PC-9 (cell line): ENCODE measurements at regions of chr1 and their contacts with region 1.

Region 1: DNA sequence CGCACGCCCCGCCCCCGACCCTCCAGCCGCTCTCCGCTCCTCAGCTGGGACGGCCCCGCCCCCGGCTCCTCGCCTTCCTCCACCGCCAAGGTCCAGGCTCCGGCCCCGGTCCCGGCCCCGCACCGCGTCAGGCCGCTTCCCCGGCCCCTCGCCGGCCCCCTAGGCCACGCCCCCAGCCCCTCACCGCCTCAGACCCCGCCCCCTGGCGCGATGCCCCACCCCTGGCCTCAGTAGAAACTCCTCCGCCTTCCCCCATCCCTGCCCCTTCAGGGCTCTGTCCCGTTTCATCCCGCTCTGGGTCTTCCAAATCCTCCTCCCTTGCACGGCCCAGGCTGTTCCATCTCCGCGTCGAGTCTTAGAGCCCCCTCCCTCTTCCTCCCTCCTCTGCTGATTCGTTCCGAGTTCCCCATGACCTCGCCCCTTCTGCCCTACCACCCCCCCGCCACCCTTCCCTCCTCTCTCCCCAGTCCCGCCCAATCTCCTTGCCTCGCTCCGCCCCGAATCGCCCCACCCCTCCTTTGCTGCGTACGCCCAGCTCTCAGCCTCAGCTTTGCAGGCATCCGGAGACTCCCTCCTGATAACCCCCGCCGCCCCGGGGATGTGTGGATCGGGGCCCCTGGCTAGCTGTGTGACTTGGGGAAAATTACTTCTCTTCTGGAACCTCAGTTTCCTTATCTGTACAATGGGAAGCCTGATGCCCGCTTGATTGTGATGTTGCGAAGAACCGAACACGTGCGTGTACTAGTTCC is 448 bp upstream of the ASAP3 start:
- DNase-seq: peak; percentile 63 to 90
- H3K4me3 ChIP-seq: peak overlapping the region; percentile 61; the same call in 1 of the 2 replicates
- H3K27ac ChIP-seq: no peak overlapping the region
- H3K4me1 ChIP-seq: peaks cover 10% of the 10 kb centered on the region
- H3K27me3 ChIP-seq: no peaks in the 10 kb centered on the region
- CTCF ChIP-seq: no peak

Region 2: DNA sequence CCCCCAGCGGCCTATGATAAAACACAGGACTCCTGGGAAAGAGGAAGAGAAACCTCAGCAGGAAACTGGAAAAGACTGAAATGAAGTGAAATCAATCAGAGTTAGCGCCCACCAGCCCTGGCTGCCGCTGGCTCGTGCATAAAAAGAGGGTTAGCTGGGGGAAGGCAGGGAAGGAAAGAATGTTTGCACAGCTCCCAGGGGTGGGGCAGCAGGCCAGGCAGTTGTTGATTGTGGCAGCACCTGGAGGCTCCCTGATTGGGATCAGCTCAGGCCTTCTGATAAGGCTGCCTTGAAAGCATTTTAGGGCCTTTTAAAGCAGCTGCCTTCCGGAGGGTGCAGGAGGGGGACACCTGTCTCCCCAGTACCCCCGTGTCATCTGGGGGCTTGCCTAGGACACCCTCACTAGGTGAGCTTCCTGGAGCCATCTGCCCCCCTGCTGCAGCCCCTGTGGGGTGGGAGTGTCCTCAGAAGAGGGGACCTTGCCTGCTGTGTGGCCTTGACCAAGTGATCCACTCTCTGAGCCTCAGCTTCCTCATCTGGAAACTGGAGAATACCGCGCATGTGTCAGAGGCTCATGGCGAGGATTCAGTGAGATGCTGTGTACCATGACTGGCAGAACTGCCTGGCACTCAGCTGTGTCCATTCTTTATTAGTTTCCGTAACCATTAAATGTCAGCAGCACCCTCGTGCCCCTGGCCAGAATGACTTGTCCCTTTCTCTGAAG is 767.2 kb before region 1 on chr1:
- CTCF ChIA-PET with region 1: no interaction called
- POLR2A ChIA-PET with region 1: interaction called, 15 read pairs
- intact Hi-C with region 1: no loop called
- DNase-seq: peak in 1 of 2 experiments; percentile 46
- H3K4me3 ChIP-seq: no peak overlapping the region
- H3K27ac ChIP-seq: no peak overlapping the region
- H3K4me1 ChIP-seq: peaks cover 7% of the 10 kb centered on the region; the same call in 1 of the 2 replicates
- H3K27me3 ChIP-seq: no peaks in the 10 kb centered on the region
- CTCF ChIP-seq: no peak

Region 3: DNA sequence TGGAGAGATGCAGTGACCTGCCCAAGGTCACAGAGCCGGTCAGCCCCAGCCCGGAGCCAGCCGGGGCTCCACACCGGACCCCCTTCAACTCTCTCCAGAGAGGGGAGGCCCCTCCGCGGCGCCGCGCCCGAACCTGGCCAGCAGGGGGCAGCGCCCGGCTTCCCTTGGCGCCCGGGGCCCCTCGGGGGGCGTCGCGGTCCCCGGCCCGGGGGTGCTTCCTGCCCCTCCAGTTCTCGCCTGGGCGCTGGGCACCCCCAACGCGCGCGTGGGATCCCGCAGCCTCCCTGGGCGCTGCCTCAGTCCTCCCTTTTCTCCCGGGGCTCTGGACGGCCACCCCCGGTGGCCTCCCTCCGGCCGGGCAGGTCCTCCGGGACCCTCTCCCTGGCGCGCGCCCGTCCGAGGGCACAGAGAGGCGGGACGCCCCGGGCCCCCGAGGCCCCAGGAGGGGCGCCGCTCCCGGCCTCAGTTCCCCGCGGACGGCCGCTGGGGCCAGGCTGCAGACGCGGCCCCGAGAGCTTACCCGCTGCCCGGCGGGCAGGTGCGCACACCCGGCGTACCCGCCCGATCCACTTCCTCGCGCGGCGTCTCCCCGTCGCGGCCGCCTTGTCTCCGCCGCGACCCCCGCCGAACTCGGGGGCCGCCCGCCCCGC is 267.5 kb before region 1 on chr1:
- CTCF ChIA-PET with region 1: no interaction called
- POLR2A ChIA-PET with region 1: no interaction called
- intact Hi-C with region 1: no loop called
- DNase-seq: peak in 1 of 2 experiments; percentile 50
- H3K4me3 ChIP-seq: peak overlapping the region; percentile 66
- H3K27ac ChIP-seq: no peak overlapping the region
- H3K4me1 ChIP-seq: peaks cover 22% of the 10 kb centered on the region; the same call in 1 of the 2 replicates
- H3K27me3 ChIP-seq: no peaks in the 10 kb centered on the region
- CTCF ChIP-seq: peak; percentile 79

Region 4: GRCh38 chr1:23389837-23390321 is 94.5 kb before region 1 on chr1:
- CTCF ChIA-PET with region 1: no interaction called
- POLR2A ChIA-PET with region 1: interaction called, 10 read pairs
- intact Hi-C with region 1: no loop called
- DNase-seq: no peak
- H3K4me3 ChIP-seq: no peak overlapping the region
- H3K27ac ChIP-seq: no peak overlapping the region
- H3K4me1 ChIP-seq: peaks cover 15% of the 10 kb centered on the region; the same call in 1 of the 2 replicates
- H3K27me3 ChIP-seq: no peaks in the 10 kb centered on the region
- CTCF ChIP-seq: no peak

Region 5: DNA sequence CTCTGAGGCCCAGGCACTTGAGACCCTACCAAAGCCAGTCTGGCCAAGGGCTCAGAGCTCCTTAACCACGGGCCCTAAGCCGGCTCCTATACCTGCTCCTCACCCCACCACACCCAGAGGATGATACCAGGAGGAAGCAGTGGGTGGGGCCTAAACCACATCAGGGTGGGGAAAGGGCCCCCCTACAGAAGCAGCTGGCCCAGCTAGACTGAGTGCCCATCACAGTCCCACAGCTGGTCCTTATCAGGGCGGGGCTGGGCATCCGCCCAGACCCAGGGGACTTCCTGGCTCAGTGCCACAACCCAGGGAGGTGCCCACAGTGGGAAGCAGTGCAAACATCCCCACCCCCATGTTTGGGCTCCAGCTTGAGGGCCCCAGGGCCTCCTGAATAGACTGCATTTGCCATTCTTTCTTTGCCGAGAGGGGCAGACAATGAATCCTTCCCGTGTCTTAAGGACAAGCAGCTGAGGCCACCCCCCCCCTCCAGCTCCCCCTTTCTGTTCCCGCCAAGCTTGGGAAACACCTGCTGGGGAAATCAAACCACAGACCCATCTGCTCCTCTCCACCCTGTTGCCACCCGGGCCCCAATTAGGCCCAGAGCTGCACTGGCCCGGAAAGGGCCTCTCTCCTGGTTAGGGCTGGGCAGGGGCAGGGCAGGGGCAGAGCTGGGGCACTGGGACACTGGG is 40.4 kb after region 1 on chr1:
- CTCF ChIA-PET with region 1: interaction called, 5 read pairs
- POLR2A ChIA-PET with region 1: interaction called, 28 read pairs
- intact Hi-C with region 1: loop called (anchors 5 kb)
- DNase-seq: peak; percentile 48 to 50
- H3K4me3 ChIP-seq: no peak overlapping the region
- H3K27ac ChIP-seq: peak overlapping the region; percentile 12; the same call in 1 of the 2 replicates
- H3K4me1 ChIP-seq: peaks cover 64% of the 10 kb centered on the region
- H3K27me3 ChIP-seq: no peaks in the 10 kb centered on the region
- CTCF ChIP-seq: no peak

Region 6: DNA sequence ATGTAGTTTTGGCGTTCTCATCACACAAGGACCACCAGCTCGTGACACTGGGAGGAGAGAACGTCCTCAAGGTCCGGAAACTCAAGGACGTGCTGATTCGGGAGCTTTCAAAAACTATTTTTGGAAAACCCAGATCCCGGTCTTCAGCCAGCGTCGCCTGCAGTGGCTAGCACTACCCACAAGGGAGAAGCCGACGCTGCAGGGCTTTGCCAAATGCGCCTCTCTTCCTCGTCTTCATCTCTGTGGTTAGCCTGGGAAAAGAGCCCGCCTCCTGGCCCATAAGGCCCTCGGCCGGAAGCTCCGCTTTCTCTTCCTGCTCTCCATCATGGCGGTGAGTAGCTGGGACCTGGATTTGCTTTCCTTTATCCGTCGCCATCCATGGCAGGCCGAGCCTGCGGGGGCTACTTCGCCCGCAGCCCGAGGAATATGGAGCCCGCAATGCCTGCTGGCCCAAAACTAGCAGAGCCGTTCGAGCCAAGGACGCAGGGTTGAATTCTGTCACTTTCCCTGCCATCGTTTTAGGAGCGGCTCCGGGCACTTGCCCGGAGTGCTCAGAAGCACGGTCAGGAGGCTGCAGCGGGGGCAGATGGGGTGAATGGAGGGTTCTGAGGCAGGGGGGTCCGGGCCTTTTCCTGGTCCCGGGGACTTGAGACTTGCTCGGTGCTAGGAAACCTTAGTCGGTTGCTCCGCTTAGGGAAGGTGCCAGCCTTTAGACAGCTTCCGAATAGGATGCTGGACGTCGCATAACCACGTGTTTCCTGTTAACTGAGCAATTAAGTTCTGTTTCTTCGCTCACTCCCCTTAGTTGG is 207.3 kb after region 1 on chr1 and contains the start of gene RPL11:
- CTCF ChIA-PET with region 1: interaction called, 11 read pairs
- POLR2A ChIA-PET with region 1: no interaction called
- intact Hi-C with region 1: no loop called
- DNase-seq: peak; percentile 84 to 85
- H3K4me3 ChIP-seq: peak within 1 kb of the TSS; percentile 97
- H3K27ac ChIP-seq: peak within 1 kb of the TSS; percentile 93
- H3K4me1 ChIP-seq: peaks cover 25% of the 10 kb centered on the region
- H3K27me3 ChIP-seq: no peaks in the 10 kb centered on the region
- CTCF ChIP-seq: peak; percentile 55
- total RNA-seq, gene RPL11: 1,015 and 1,205 TPM in 2 replicates